Caco-2 (cell line): ENCODE measurements at regions of chr15 and their contacts with region 1.

Region 1: DNA sequence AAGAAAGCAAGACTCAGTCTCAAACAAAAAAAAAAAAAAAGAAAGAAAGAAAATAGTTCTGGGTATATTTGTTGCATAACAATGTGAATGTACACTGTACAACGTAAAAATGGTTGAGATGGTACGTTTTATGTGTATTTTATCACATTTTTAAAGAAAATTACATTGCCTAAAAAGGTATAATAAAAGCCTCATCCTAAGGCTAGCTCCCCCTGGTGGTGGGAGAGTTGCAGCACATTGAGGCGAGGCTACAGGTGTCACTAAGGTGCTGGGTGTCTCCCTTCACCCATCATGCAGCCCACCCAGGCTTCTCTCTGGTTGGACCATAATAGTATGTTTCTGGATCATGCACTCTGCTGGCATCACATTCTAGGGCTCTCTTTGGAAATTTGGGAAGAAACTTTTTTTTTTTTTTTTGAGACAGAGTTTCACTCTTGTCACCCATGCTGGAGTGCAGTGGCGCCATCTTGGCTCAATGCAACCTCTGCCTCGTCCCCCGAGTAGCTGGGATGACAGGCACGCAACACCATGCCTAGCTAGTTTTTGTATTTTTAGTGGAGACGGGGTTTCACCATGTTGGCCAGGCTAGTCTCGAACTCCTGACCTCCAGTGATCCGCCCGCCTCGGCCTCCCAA is 12.4 kb upstream of the RAB11A start:
- DNase-seq: peak; percentile 76 to 78
- H3K4me3 ChIP-seq: no peak overlapping the region
- H3K4me3 Mint-ChIP-seq: no peak overlapping the region
- H3K27ac Mint-ChIP-seq: no peak overlapping the region
- H3K4me1 ChIP-seq: no peaks in the 10 kb centered on the region
- H3K4me1 Mint-ChIP-seq: peaks cover 4% of the 10 kb centered on the region
- H3K27me3 ChIP-seq: no peaks in the 10 kb centered on the region
- H3K27me3 Mint-ChIP-seq: no peaks in the 10 kb centered on the region
- CTCF ChIP-seq: peak; percentile 77 to 78

Region 2: DNA sequence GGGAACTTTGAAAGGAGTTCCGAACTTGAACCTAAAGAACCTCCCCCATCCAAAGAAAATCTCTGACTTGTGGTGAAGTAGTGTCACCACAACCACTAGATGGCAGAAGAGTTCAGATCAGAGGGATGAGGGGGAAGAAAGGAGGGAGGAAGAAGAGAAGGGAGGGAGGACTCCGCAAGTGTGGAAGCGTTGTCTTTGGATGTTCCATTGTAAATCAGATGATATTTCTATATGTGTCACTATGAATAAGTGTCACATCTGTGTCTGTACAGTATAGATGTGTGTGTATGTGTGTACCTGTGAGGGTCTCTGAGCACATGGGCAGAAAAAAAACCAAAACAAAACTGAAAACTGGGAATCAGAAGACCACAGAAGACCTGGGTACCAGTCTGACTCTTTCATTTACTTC is 218.3 kb before region 1 on chr15:
- CTCF ChIA-PET with region 1: no interaction called
- POLR2A ChIA-PET with region 1: no interaction called
- intact Hi-C with region 1: loop called (anchors 2 kb)
- DNase-seq: peak in 1 of 2 experiments; percentile 67
- H3K4me3 ChIP-seq: no peak overlapping the region
- H3K4me3 Mint-ChIP-seq: no peak overlapping the region
- H3K27ac Mint-ChIP-seq: no peak overlapping the region
- H3K4me1 ChIP-seq: no peaks in the 10 kb centered on the region
- H3K4me1 Mint-ChIP-seq: no peaks in the 10 kb centered on the region
- H3K27me3 ChIP-seq: no peaks in the 10 kb centered on the region
- H3K27me3 Mint-ChIP-seq: no peaks in the 10 kb centered on the region
- CTCF ChIP-seq: peak; percentile 74 to 78

Region 3: GRCh38 chr15:65783872-65784271 is 73.1 kb before region 1 on chr15:
- CTCF ChIA-PET with region 1: no interaction called
- POLR2A ChIA-PET with region 1: no interaction called
- intact Hi-C with region 1: no loop called
- DNase-seq: peak in 1 of 2 experiments; percentile 28
- H3K4me3 ChIP-seq: no peak overlapping the region
- H3K4me3 Mint-ChIP-seq: peak overlapping the region; percentile 71
- H3K27ac Mint-ChIP-seq: peak overlapping the region; percentile 88
- H3K4me1 ChIP-seq: peaks cover 32% of the 10 kb centered on the region
- H3K4me1 Mint-ChIP-seq: peaks cover 19% of the 10 kb centered on the region
- H3K27me3 ChIP-seq: no peaks in the 10 kb centered on the region
- H3K27me3 Mint-ChIP-seq: no peaks in the 10 kb centered on the region
- CTCF ChIP-seq: no peak